ENCODE measurements at regions of chr11 and their contacts with region 1.

Region 1: GRCh38 chr11:2298795-2299761 is 2.6 kb downstream of the C11orf21 start:
- DNase-seq: peak in 13 of 42 donors; percentile 1 to 42 (median 16)

Region 2: GRCh38 chr11:2196970-2197770 is 101.9 kb before region 1 on chr11:
- intact Hi-C with region 1: loop called (anchors 10 kb)
- DNase-seq: peak; percentile 32 to 86 (median 71)

Measured in head of caudate nucleus (tissue), 42 donors.